Panc1 (cell line): ENCODE measurements at regions of chr6 and their contacts with region 1.

Region 1: GRCh38 chr6:42790549-42791181 is 8.8 kb downstream of the BICRAL start:
- DNase-seq: no peak
- ATAC-seq: no peak
- H3K4me3 ChIP-seq: no peak overlapping the region
- H3K27ac ChIP-seq: no peak overlapping the region
- H3K4me1 ChIP-seq: peaks cover 15% of the 10 kb centered on the region; the same call in 1 of the 2 replicates
- H3K27me3 ChIP-seq: no peaks in the 10 kb centered on the region
- CTCF ChIP-seq: no peak

Region 2: GRCh38 chr6:42099340-42100028 is 691.2 kb before region 1 on chr6:
- CTCF ChIA-PET with region 1: interaction called, 10 read pairs
- POLR2A ChIA-PET with region 1: no interaction called
- in situ Hi-C with region 1: no loop called
- intact Hi-C with region 1: no loop called
- DNase-seq: no peak
- ATAC-seq: 0 out of 2 replicates have a peak, but pooled peaks have one; percentile 31
- H3K4me3 ChIP-seq: no peak overlapping the region
- H3K27ac ChIP-seq: no peak overlapping the region
- H3K4me1 ChIP-seq: peaks cover 12% of the 10 kb centered on the region
- H3K27me3 ChIP-seq: no peaks in the 10 kb centered on the region
- CTCF ChIP-seq: no peak

Region 3: DNA sequence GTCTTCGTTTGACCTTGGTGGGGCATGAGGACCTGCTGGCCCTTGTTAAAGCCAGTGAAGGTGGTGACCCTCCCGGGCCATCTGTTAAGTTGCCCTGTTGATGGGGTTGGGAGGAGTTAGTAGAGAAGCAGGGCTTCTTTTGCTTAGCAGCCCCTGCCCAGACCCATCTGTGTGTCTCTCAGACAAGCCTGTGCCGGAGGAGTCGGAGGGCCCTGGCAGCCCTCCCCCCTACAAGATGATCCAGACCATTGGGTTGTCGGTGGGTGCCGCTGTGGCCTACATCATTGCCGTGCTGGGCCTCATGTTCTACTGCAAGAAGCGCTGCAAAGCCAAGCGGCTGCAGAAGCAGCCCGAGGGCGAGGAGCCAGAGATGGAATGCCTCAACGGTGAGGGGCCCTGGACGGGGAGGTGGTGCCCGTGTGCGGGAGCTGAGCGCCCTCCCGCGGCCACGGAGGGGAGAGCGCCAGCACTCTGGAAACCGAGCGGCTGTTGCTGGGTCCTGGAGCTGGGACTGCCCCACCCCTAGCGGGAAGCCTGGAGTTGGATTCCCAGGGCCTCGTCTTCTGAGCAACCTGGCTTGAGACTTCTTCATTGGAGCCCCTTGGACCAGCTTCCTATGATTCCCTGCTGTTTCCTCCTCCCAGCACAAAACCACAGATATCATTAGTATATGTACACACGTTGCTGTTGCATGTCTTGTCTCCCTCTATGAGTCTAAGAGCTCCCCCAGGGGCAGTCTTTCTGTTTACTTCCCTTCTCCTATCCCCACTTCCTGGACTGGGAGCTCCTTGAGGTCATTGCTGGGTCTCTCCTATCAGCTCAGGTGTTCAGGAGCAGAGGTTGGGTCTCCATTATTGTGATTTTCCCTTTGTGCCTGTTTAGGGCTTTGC is 352.8 kb after region 1 on chr6:
- CTCF ChIA-PET with region 1: no interaction called
- POLR2A ChIA-PET with region 1: no interaction called
- in situ Hi-C with region 1: no loop called
- intact Hi-C with region 1: no loop called
- DNase-seq: no peak
- ATAC-seq: peak; percentile 97
- H3K4me3 ChIP-seq: no peak overlapping the region
- H3K27ac ChIP-seq: peak overlapping the region; percentile 60
- H3K4me1 ChIP-seq: peaks cover 17% of the 10 kb centered on the region
- H3K27me3 ChIP-seq: no peaks in the 10 kb centered on the region
- CTCF ChIP-seq: peak; percentile 97